ENCODE measurements at regions of chr11 and their contacts with region 1.

Region 1: DNA sequence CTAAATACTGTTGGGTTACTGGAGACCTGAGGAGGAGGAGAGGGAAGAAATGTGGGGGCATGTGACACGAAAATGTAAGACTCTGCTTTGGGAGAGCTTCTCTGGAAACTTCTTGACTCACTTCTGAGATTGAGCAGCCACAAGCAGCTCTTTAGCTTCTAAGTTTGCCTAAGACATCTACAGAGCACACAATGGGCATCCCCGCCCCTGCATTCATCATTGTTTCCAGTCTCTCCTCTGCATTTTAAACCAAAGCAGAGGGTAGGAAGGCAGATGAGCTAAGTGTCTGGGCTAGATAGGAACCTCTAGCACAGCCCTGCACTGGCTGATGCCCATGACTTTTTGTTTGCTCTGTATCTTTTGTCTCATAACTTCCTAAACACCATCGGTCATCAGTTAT is 2.1 kb upstream of the OR52D1 start:
- DNase-seq: no peak
- H3K4me3 ChIP-seq: no peak overlapping the region
- H3K27ac ChIP-seq: no peak overlapping the region
- H3K4me1 ChIP-seq: no peaks in the 10 kb centered on the region
- H3K27me3 ChIP-seq: peaks cover 8% of the 10 kb centered on the region
- CTCF ChIP-seq: no peak
- EP300 ChIP-seq: no peak
- RAD21 ChIP-seq: no peak

Region 2: DNA sequence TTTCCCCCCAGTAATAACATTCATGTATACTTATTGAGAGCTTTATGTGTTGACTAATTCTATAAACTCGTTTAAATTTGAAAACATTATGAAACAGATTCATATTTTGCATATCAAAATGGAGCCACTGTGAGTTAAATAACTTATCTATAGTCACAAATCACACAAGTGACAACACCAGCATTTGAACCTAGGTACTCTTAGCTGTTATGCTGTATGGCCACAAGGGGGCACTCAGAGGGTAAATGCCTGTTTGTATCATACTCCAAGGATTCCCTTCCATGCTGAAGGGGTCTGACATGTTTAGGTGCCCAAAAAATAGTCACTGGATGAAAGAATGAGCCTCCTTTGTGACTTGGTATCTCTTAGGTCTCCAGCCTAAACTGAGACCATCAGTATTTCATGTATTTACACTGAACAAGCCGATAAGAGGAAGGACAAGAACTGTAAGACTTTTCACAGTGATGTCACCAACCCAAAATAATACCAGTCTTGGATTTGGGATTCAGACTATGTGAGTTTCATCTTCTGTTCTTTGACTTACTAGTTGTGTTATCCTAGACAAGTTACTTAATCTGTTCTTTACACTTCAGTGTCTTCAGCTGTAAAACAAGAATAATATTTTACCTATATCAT is 10.1 kb before region 1 on chr11:
- CTCF ChIA-PET with region 1: interaction called, 10 read pairs
- POLR2A ChIA-PET with region 1: no interaction called
- DNase-seq: peak; percentile 53
- H3K4me3 ChIP-seq: no peak overlapping the region; a peak in 1 of 4 replicates
- H3K27ac ChIP-seq: no peak overlapping the region
- H3K4me1 ChIP-seq: no peaks in the 10 kb centered on the region
- H3K27me3 ChIP-seq: no peaks in the 10 kb centered on the region; the same call in 1 of the 2 replicates
- CTCF ChIP-seq: peak; percentile 86
- EP300 ChIP-seq: no peak
- RAD21 ChIP-seq: peak; percentile 54

Measured in SK-N-SH (cell line).